Naive thymus-derived CD8-positive, alpha-beta T cell (primary cell): ENCODE measurements at regions of chr1 and their contacts with region 1.

Region 1: DNA sequence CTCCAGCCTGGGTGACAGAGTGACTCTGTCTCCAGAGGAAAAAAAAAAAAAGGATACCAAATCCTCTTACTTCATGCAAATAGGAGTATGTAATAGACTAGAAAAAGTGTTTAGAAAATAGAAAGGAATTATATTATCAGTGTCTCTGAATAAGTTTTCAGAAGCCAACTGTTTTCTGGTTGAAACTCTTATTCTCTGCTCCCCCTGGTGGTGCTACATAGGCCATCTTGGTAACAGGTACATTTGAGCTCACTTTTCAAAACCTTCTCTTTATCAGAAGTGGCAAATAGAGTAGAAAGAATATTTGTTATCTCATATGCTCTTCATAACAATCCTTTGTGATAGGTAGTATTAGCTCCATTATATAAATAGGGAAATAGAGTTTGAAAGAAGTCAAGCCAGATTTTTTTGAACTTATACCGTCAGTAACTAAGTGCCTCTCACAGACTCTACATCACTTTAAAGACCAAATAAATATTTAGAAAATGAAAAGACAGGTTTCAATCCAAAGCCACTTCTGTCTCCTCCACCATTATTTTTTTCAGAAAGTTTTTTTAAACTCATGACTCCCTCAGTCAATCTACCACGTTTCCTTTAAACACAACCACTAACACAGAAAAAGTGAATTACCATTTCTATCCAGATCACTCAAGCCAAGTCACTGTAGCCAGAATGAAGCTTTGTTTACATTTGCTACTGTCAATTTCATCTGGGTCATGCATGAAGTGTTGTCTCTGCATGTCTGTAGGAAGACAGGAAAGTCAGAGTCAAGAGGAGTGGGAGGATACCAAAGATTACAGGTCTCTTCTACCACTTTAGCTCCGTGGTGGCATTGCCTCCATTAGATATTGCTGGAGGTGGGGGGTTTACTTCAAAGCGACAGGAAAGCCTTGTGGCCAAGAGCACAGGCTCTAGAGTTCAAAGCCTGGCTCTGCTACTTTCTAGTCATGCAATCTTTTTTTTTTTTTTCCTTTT is 45.6 kb downstream of the IL23R start:
- DNase-seq: peak; percentile 11 to 75 (median 40)
- ATAC-seq: peak; percentile 72 to 74
- H3K4me3 Mint-ChIP-seq: peak overlapping the region in 5 of 10 donors; percentile 3 to 55 (median 18)
- H3K27ac Mint-ChIP-seq: peak overlapping the region in 3 of 10 donors; percentile 2 to 9 (median 7)
- H3K4me1 Mint-ChIP-seq: peaks cover 9 to 24% (median 21%) of the 10 kb centered on the region in 4 donors
- H3K27me3 Mint-ChIP-seq: no peaks in the 10 kb centered on the region

Region 2: DNA sequence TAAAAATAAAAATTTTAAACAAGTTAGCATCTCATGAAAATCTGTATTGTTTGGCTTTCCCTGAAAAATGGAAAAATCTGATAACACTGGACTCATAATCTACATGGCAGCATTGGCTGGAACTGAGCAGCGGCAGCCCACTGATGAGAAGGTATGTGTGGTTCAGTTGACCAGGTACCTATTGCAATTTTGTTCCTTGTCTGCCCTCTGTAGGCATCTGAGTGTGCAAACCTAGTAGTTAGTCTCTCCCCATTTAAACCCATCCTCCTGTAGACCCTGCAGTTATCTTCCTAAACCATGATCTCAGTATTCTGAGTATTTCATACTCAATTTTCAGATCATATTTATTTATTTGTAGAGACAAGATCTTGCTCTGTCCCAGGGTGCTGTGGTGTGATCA is 277.8 kb after region 1 on chr1:
- POLR2A ChIA-PET with region 1: interaction called, 11 read pairs
- DNase-seq: peak in 3 of 10 donors; percentile 5 to 23 (median 8)
- ATAC-seq: peak; percentile 43 to 58
- H3K4me3 Mint-ChIP-seq: no peak overlapping the region
- H3K27ac Mint-ChIP-seq: no peak overlapping the region
- H3K4me1 Mint-ChIP-seq: no peaks in the 10 kb centered on the region
- H3K27me3 Mint-ChIP-seq: peaks cover 0 to 3% (median 0%) of the 10 kb centered on the region in 5 donors